H1 (cell line): ENCODE measurements at regions of chr15 and their contacts with region 1.

Region 1: GRCh38 chr15:58227706-58228543 is 89.7 kb downstream of the AQP9 start:
- DNase-seq: peak; percentile 36 to 80
- H3K4me3 ChIP-seq: peak overlapping the region in 1 of 4 experiments; percentile 35; a peak in 1 of 8 replicates
- H3K27ac ChIP-seq: no peak overlapping the region
- H3K4me1 ChIP-seq: peaks cover 8 to 18% (median 12%) of the 10 kb centered on the region in 4 experiments; a peak in 6 of 7 replicates
- H3K27me3 ChIP-seq: no peaks in the 10 kb centered on the region
- CTCF ChIP-seq: peak; percentile 68 to 76 (median 69)
- EP300 ChIP-seq: no peak
- POLR2A ChIP-seq: no peak
- RAD21 ChIP-seq: peak; percentile 97 to 98

Region 2: DNA sequence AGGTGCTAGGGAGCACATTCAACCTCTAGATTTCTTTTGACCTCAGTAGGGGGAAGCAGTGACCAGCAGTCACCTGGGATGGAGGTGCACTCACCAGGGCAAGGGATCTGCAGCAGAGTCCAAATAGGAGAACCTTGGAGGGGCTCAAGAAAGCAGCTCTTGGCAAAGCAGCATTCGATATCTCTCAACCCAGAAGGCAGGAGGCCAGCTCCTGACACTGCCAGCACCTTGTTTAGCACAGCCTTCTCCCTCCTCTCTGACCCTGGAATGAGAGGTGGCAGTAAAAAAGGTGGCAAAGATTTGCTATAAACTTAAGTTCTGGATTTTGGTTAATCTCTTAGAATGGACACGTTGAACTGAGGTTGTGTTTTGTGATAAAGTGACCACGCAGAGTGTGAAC is 18.1 kb after region 1 on chr15:
- CTCF ChIA-PET with region 1: interaction called, 12 read pairs
- POLR2A ChIA-PET with region 1: no interaction called
- DNase-seq: no peak
- H3K4me3 ChIP-seq: no peak overlapping the region
- H3K27ac ChIP-seq: no peak overlapping the region
- H3K4me1 ChIP-seq: no peaks in the 10 kb centered on the region
- H3K27me3 ChIP-seq: peaks cover 0 to 2% (median under 1%) of the 10 kb centered on the region in 4 experiments; a peak in 1 of 7 replicates
- CTCF ChIP-seq: no peak
- EP300 ChIP-seq: no peak
- POLR2A ChIP-seq: no peak
- RAD21 ChIP-seq: no peak